BJ (cell line): ENCODE measurements at regions of chr10 and their contacts with region 1.

Region 1: DNA sequence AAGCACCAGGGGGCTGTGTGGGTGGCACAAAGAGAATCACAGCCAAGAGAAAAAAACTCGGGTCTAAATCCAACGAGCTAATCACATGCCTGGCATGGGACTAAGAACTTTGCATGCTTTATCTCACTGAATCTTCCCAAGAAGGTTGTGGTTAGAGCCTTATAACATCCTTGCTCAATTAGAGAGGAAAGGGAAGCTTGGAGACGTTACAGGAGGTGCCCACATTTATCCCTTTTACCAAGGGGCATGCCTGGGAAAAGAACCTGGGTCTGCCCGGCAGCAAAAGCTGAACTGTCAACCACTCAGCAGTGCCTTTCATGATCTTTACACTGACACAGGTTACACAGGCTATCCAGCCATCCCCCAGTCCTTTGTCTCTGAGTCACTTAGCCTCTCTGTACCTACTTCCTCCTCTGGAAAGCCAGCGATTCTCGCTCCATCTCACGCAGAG is 190.1 kb downstream of the PRPF18 start:
- DNase-seq: peak; percentile 49
- H3K4me3 ChIP-seq: no peak overlapping the region
- H3K27me3 ChIP-seq: no peaks in the 10 kb centered on the region
- CTCF ChIP-seq: no peak

Region 2: GRCh38 chr10:13613519-13613918 is 163.4 kb before region 1 on chr10:
- CTCF ChIA-PET with region 1: interaction called, 21 read pairs
- POLR2A ChIA-PET with region 1: no interaction called
- DNase-seq: no peak
- H3K4me3 ChIP-seq: no peak overlapping the region
- H3K27me3 ChIP-seq: no peaks in the 10 kb centered on the region
- CTCF ChIP-seq: peak; percentile 52

Region 3: DNA sequence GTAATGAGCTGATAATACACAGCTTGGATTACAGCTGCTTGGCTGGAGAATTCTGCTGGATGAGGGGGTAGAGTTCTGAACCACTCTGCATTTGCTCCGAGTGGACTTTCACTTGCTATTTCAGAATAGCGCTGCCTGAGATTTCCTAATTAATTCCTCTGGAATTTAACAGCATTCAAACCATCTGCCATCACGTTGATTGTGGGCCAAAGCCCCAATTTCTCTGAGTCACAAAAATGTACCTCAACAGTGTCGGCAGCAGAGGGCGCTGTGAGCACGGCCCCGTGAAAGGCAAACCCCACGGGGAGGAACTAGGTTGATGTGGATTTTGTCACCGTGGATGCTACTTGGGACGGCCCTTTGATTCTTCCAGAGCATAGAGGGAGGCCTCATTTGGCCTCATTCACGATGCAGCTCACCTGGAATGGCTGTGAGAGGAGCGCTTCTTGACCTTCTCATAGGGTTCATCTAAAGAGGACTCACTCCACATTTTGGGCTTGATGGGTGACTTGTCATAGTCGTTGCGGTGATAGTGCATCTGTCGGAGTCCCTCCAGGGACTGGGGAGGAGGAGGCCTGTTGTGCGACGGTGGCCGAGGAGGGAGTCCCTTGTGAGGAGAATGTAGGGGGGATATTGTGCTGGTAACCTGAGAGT is 116.9 kb before region 1 on chr10:
- CTCF ChIA-PET with region 1: interaction called, 43 read pairs
- POLR2A ChIA-PET with region 1: no interaction called
- DNase-seq: peak; percentile 20
- H3K4me3 ChIP-seq: no peak overlapping the region
- H3K27me3 ChIP-seq: no peaks in the 10 kb centered on the region
- CTCF ChIP-seq: peak; percentile 90

Region 4: DNA sequence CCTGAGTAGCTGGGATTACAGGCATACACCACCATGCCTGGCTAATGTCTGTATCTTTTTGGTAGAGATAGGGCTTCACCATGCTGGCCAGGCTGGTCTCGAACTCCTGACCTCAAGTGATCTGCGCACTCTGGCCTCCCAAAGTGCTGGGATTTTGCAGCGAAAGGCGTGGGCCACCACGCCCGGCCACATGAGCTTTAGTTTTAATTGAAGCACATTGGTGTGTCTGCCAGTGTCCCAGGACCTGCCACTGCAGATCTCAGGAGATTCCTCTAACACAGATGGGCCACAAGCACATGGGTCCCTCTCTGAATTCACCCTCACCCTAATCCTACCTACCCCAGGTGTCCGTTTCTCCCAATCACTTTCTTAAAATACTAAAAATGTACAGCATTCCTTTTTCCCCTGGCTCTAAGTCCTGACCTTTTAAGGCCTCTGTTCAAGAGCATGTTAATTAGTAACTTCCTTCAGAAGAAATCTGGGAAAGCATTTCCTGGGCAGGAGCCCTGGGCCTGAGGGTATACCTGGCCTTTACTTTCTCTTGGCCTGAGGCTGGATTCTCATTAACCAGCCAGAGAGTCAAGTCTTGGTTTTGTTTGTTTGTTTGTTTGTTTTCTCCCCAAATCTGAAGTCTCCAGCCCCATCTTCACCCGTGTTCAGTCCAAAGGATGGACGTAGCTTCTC is 107.6 kb before region 1 on chr10:
- CTCF ChIA-PET with region 1: interaction called, 10 read pairs
- POLR2A ChIA-PET with region 1: interaction called, 8 read pairs
- DNase-seq: no peak
- H3K4me3 ChIP-seq: no peak overlapping the region
- H3K27me3 ChIP-seq: no peaks in the 10 kb centered on the region
- CTCF ChIP-seq: no peak

Region 5: GRCh38 chr10:13707156-13707881 is 69.6 kb before region 1 on chr10:
- CTCF ChIA-PET with region 1: interaction called, 10 read pairs
- POLR2A ChIA-PET with region 1: no interaction called
- DNase-seq: peak; percentile 66
- H3K4me3 ChIP-seq: peak overlapping the region; percentile 39
- H3K27me3 ChIP-seq: no peaks in the 10 kb centered on the region
- CTCF ChIP-seq: 0 out of 2 replicates have a peak, but pooled peaks have one; percentile 11

Region 6: GRCh38 chr10:14039968-14040671 is 263.2 kb after region 1 on chr10:
- CTCF ChIA-PET with region 1: no interaction called
- POLR2A ChIA-PET with region 1: no interaction called
- DNase-seq: peak; percentile 95
- H3K4me3 ChIP-seq: no peak overlapping the region
- H3K27me3 ChIP-seq: no peaks in the 10 kb centered on the region
- CTCF ChIP-seq: no peak

Region 7: GRCh38 chr10:14200698-14201544 is 424.0 kb after region 1 on chr10:
- CTCF ChIA-PET with region 1: no interaction called
- POLR2A ChIA-PET with region 1: interaction called, 10 read pairs
- DNase-seq: no peak
- H3K4me3 ChIP-seq: no peak overlapping the region
- H3K27me3 ChIP-seq: peaks cover 5% of the 10 kb centered on the region
- CTCF ChIP-seq: peak; percentile 27